GM12878 (cell line): ENCODE measurements at regions of chr14 and their contacts with region 1.

Region 1: DNA sequence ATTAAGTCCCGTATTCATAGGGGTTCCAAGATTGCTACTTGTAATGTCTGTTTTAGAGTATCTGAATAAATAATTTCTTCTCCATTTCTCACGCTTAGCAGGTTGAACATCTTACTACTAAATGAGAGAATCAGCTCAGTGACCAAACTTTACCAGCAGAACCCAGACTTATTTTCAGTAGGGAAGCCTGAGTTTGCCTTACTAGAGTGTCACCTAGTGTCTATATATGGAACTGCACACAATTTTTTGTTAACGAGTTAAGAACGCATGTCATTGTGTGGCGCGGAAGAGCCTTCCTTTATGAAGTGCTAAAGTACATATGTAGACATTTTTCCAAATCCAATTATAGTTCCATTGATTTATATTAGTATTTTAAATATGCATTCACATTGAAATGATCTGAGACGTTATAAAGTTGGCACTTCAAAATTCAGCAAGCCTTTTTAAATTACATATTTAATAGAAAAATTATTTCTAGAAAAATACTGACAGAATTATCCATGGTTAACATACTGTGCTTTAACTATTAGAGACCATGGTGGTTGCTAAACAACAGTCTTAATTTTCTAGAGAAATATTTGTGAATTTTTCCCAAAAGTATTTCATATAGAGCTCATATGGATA is 88.3 kb downstream of the RPS29 start:
- DNase-seq: peak; percentile 21
- ATAC-seq: peak; percentile 91
- H3K4me3 ChIP-seq: no peak overlapping the region
- H3K27ac ChIP-seq: no peak overlapping the region
- H3K4me1 ChIP-seq: no peaks in the 10 kb centered on the region
- H3K27me3 ChIP-seq: peaks cover 0 to 4% of the 10 kb centered on the region in 2 experiments; a peak in 1 of 4 replicates
- CTCF ChIP-seq: peak; percentile 79 to 87 (median 81)
- EP300 ChIP-seq: no peak
- POLR2A ChIP-seq: no peak
- RAD21 ChIP-seq: peak; percentile 80

Region 2: GRCh38 chr14:49483268-49483667 is 14.6 kb before region 1 on chr14:
- CTCF ChIA-PET with region 1: interaction called, 15 read pairs
- POLR2A ChIA-PET with region 1: no interaction called
- RAD21 ChIA-PET with region 1: interaction called, 5 read pairs
- SMC1A ChIA-PET with region 1: interaction called, 7 read pairs
- in situ Hi-C with region 1: no loop called
- intact Hi-C with region 1: no loop called
- DNase-seq: peak; percentile 13
- ATAC-seq: peak; percentile 45; the same call in 2 of the 3 replicates
- H3K4me3 ChIP-seq: no peak overlapping the region
- H3K27ac ChIP-seq: no peak overlapping the region
- H3K4me1 ChIP-seq: peaks cover 11% of the 10 kb centered on the region; the same call in 1 of the 2 replicates
- H3K27me3 ChIP-seq: no peaks in the 10 kb centered on the region
- CTCF ChIP-seq: no peak
- EP300 ChIP-seq: no peak
- POLR2A ChIP-seq: no peak
- RAD21 ChIP-seq: no peak

Region 3: DNA sequence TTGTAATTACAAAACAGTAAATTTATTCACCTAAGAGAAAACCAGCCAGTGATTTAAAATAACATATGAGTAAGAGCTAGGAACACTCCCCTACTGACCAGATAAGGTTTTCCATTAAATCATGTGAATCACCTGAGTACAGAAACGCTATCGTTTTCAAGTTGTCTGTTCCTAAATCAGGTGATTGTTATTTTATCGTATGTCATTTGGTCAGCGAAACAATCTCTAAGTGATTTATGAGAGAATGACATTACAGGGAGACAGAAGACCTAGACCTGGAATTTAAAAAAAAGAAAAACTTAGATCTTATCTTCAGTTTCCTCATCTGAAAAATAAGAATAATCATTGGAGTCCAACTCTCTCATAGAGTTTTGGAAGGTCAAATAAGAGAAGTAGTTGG is 41.1 kb after region 1 on chr14:
- CTCF ChIA-PET with region 1: no interaction called
- POLR2A ChIA-PET with region 1: no interaction called
- RAD21 ChIA-PET with region 1: no interaction called
- SMC1A ChIA-PET with region 1: no interaction called
- in situ Hi-C with region 1: no loop called
- intact Hi-C with region 1: no loop called
- DNase-seq: no peak
- ATAC-seq: no peak
- H3K4me3 ChIP-seq: no peak overlapping the region
- H3K27ac ChIP-seq: no peak overlapping the region
- H3K4me1 ChIP-seq: no peaks in the 10 kb centered on the region
- H3K27me3 ChIP-seq: no peaks in the 10 kb centered on the region
- CTCF ChIP-seq: no peak
- EP300 ChIP-seq: no peak
- POLR2A ChIP-seq: no peak
- RAD21 ChIP-seq: no peak